ENCODE measurements at regions of chr2 and their contacts with region 1.

Region 1: DNA sequence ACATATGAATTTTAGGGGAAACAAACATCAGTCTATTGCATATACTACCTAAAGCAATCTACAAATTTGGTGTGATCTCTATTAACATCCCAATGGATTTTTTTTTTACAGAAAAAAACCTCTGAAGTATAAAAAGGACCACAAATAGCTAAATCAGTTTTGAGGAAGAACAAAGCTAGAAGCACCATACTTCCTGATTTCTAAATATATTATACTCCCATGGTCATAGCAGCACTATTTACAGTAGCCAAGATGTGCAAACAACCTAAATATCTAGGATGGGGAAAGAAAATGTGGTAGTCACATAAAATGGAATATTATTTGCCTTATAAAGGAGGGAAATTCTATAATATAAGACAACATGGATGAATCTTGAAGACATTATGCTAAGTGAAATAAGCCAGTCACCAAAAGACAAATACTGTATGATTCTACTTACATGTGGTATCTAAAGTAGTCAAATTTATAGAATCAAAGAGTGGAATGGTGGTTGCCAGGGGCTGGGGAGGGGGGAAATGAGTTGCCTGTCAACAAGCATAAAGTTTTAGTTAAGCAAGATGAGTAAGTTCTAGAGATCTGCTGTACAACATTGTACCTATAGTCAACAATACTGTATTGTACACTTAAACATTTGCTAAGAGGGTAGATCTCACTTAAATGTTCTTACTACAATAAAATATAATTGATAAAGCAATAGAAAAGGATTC is 17.6 kb upstream of the CASP8 start:
- DNase-seq: no peak
- ATAC-seq: no peak
- H3K4me3 ChIP-seq: no peak overlapping the region
- H3K27ac ChIP-seq: no peak overlapping the region
- H3K4me1 ChIP-seq: no peaks in the 10 kb centered on the region
- H3K27me3 ChIP-seq: no peaks in the 10 kb centered on the region
- CTCF ChIP-seq: no peak
- POLR2A ChIP-seq: no peak

Region 2: DNA sequence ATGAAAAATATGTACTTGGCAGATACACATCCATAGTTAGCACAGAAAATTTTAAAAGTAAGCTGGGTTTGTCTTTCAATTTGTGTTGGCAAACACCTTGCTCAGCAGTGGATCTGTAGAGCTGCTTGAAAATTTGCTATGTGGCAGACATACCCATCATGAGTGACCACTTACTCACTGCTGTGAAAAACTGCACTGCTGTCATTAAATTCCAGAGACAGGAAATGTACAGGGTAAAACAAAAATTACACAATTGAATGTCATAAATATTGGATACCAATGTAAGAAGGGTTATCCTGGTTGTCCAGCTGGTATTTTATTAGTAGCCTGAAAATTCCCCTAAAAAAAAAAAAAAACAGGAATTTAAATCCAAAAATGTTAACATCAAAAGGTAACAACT is 329.1 kb before region 1 on chr2:
- intact Hi-C with region 1: no loop called
- DNase-seq: no peak
- ATAC-seq: no peak
- H3K4me3 ChIP-seq: no peak overlapping the region
- H3K27ac ChIP-seq: no peak overlapping the region
- H3K4me1 ChIP-seq: no peaks in the 10 kb centered on the region
- H3K27me3 ChIP-seq: no peaks in the 10 kb centered on the region
- CTCF ChIP-seq: no peak
- POLR2A ChIP-seq: no peak

Region 3: GRCh38 chr2:201057087-201057521 is 185.6 kb before region 1 on chr2:
- intact Hi-C with region 1: no loop called
- DNase-seq: peak in 1 of 4 donors; percentile 7
- ATAC-seq: no peak
- H3K4me3 ChIP-seq: no peak overlapping the region
- H3K27ac ChIP-seq: no peak overlapping the region
- H3K4me1 ChIP-seq: peaks cover 21% of the 10 kb centered on the region
- H3K27me3 ChIP-seq: no peaks in the 10 kb centered on the region
- CTCF ChIP-seq: no peak
- POLR2A ChIP-seq: no peak

Region 4: GRCh38 chr2:201357241-201357640 is 114.5 kb after region 1 on chr2 and contains the start of gene FLACC1:
- intact Hi-C with region 1: loop called (anchors 10 kb)
- DNase-seq: peak; percentile 41 to 64 (median 48)
- ATAC-seq: peak; percentile 96
- H3K4me3 ChIP-seq: no peak within 1 kb of the TSS
- H3K27ac ChIP-seq: no peak within 1 kb of the TSS
- H3K4me1 ChIP-seq: peaks cover 7% of the 10 kb centered on the region
- H3K27me3 ChIP-seq: no peaks in the 10 kb centered on the region
- CTCF ChIP-seq: no peak
- POLR2A ChIP-seq: no peak
- total RNA-seq, gene FLACC1: 0.78 to 2.3 TPM

Region 5: DNA sequence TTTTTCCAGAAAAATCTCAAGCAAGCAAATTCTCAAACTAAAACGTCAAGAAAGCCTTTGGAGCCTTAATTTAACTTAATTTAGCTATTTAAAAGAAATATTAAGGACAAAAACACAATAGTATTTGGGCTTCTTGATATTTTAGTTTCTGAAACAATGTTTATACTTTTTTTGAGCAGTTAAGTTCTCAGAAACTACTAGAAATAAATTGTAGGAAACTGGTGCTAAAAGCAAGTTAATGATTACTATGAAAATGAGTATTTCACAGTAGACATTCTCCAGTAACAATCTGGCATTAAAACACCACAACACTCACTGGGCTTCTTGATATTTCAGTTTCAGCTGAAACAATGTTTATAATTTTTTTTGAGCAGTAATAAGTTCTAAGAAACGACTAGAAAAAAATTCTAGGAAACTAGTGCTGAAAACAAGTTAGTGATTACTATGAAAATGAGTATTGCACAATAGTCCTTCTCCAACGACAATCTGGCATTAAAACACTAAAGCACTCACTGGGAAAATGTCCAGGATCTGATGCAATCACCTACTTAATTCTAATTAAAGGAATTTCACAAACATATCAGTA is 163.4 kb after region 1 on chr2:
- intact Hi-C with region 1: no loop called
- DNase-seq: peak; percentile 34 to 70 (median 48)
- ATAC-seq: peak; percentile 89
- H3K4me3 ChIP-seq: no peak overlapping the region
- H3K27ac ChIP-seq: peak overlapping the region; percentile 30 to 87 (median 69)
- H3K4me1 ChIP-seq: peaks cover 71% of the 10 kb centered on the region
- H3K27me3 ChIP-seq: no peaks in the 10 kb centered on the region
- CTCF ChIP-seq: no peak
- POLR2A ChIP-seq: no peak